Kidney (tissue), 22 donors: ENCODE measurements at regions of chr4 and their contacts with region 1.

Region 1: GRCh38 chr4:142838774-142839173 is 7.3 kb downstream of the INPP4B start:
- DNase-seq: no peak
- H3K4me3 ChIP-seq: no peak overlapping the region
- H3K27ac ChIP-seq: no peak overlapping the region
- H3K4me1 ChIP-seq: no peaks in the 10 kb centered on the region
- H3K27me3 ChIP-seq: no peaks in the 10 kb centered on the region
- CTCF ChIP-seq: no peak

Region 2: GRCh38 chr4:142353149-142353738 is 485.5 kb before region 1 on chr4:
- intact Hi-C with region 1: loop called (anchors 10 kb)
- DNase-seq: peak in 2 of 5 donors; percentile 77 to 82
- H3K4me3 ChIP-seq: peak overlapping the region in 1 of 3 donors; percentile 9
- H3K27ac ChIP-seq: no peak overlapping the region
- H3K4me1 ChIP-seq: peaks cover 0 to 16% (median 5%) of the 10 kb centered on the region in 3 donors
- H3K27me3 ChIP-seq: no peaks in the 10 kb centered on the region
- CTCF ChIP-seq: peak; percentile 88

Region 3: GRCh38 chr4:142567199-142567598 is 271.6 kb before region 1 on chr4:
- intact Hi-C with region 1: no loop called
- DNase-seq: no peak
- H3K4me3 ChIP-seq: no peak overlapping the region
- H3K27ac ChIP-seq: no peak overlapping the region
- H3K4me1 ChIP-seq: peaks cover 0 to 4% (median 0%) of the 10 kb centered on the region in 3 donors
- H3K27me3 ChIP-seq: no peaks in the 10 kb centered on the region
- CTCF ChIP-seq: no peak